ENCODE measurements at regions of chr12 and their contacts with region 1.

Region 1: DNA sequence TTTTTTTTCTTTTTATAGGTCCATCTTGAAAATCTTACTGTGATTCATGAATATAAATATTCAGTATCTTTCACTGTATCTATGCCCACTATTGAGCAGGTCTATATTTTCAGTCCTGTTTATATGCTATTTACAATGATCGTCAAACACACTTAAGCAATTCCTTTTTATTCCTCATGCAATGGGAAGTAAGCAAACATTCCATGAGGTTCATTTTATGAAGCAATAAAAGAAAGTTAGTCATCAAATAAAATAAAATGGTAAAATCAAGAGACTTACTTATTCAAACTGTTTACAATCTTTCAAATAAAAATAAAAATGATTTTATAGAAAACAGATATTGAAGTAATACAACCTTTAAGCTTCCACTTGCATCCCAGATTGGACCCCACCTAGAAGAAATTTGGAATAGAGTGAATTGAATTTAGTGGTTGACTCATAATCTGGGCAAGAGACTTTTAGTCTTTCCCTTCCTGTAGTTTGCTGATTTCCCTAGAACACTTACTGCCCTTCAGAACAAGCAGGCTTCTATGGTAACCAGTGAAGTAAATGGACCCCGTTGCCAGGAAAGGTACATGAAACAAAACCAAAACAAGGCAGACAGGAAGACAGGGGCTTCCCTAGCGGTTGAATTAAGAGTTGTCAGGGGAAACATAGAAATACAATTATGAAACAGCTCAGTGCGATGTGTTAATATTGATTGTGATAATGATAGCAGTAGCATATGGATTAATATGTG is 241.0 kb upstream of the ATP2B1 start:
- DNase-seq: peak; percentile 83
- ATAC-seq: peak; percentile 87
- H3K4me3 ChIP-seq: peak overlapping the region; percentile 33; the same call in 1 of the 2 replicates
- H3K27ac ChIP-seq: peak overlapping the region; percentile 83; the same call in 1 of the 2 replicates
- H3K4me1 ChIP-seq: peaks cover 15% of the 10 kb centered on the region; the same call in 1 of the 2 replicates
- H3K27me3 ChIP-seq: no peaks in the 10 kb centered on the region
- CTCF ChIP-seq: peak; percentile 31 to 63 (median 35); a peak in 5 of 6 replicates
- EP300 ChIP-seq: peak; percentile 86 to 96; a peak in 3 of 4 replicates
- POLR2A ChIP-seq: no peak
- RAD21 ChIP-seq: peak; percentile 71

Region 2: GRCh38 chr12:89756585-89757321 is 192.9 kb before region 1 on chr12:
- CTCF ChIA-PET with region 1: no interaction called
- POLR2A ChIA-PET with region 1: no interaction called
- RAD21 ChIA-PET with region 1: interaction called, 8 read pairs
- SMC1A ChIA-PET with region 1: interaction called, 8 read pairs
- in situ Hi-C with region 1: no loop called
- intact Hi-C with region 1: loop called (anchors 5 kb)
- DNase-seq: peak; percentile 97
- ATAC-seq: peak; percentile 89
- H3K4me3 ChIP-seq: no peak overlapping the region
- H3K27ac ChIP-seq: peak overlapping the region; percentile 90
- H3K4me1 ChIP-seq: peaks cover 44% of the 10 kb centered on the region
- H3K27me3 ChIP-seq: no peaks in the 10 kb centered on the region
- CTCF ChIP-seq: no peak
- EP300 ChIP-seq: peak; percentile 97 to 98
- POLR2A ChIP-seq: no peak
- RAD21 ChIP-seq: no peak

Region 3: GRCh38 chr12:89862511-89863179 is 87.0 kb before region 1 on chr12:
- CTCF ChIA-PET with region 1: interaction called, 5 read pairs
- POLR2A ChIA-PET with region 1: interaction called, 4 read pairs
- RAD21 ChIA-PET with region 1: interaction called, 4 read pairs
- SMC1A ChIA-PET with region 1: interaction called, 18 read pairs
- in situ Hi-C with region 1: no loop called
- intact Hi-C with region 1: loop called (anchors 2 kb)
- DNase-seq: peak; percentile 79
- ATAC-seq: peak; percentile 75
- H3K4me3 ChIP-seq: peak overlapping the region; percentile 60
- H3K27ac ChIP-seq: peak overlapping the region; percentile 89
- H3K4me1 ChIP-seq: peaks cover 39% of the 10 kb centered on the region
- H3K27me3 ChIP-seq: no peaks in the 10 kb centered on the region
- CTCF ChIP-seq: no peak
- EP300 ChIP-seq: peak in 1 of 2 experiments; percentile 17; a peak in 1 of 4 replicates
- POLR2A ChIP-seq: peak; percentile 58
- RAD21 ChIP-seq: 0 out of 2 replicates have a peak, but pooled peaks have one; percentile 19

Region 4: GRCh38 chr12:89960011-89960507 is 10.4 kb after region 1 on chr12:
- CTCF ChIA-PET with region 1: interaction called, 19 read pairs
- POLR2A ChIA-PET with region 1: interaction called, 22 read pairs
- RAD21 ChIA-PET with region 1: interaction called, 47 read pairs
- SMC1A ChIA-PET with region 1: interaction called, 94 read pairs
- in situ Hi-C with region 1: no loop called
- intact Hi-C with region 1: no loop called
- DNase-seq: peak; percentile 68
- ATAC-seq: peak; percentile 90
- H3K4me3 ChIP-seq: peak overlapping the region; percentile 65; the same call in 1 of the 2 replicates
- H3K27ac ChIP-seq: peak overlapping the region; percentile 71
- H3K4me1 ChIP-seq: peaks cover 9% of the 10 kb centered on the region
- H3K27me3 ChIP-seq: no peaks in the 10 kb centered on the region
- CTCF ChIP-seq: no peak
- EP300 ChIP-seq: peak in 1 of 2 experiments; percentile 55; a peak in 1 of 4 replicates
- POLR2A ChIP-seq: no peak
- RAD21 ChIP-seq: no peak

Region 5: DNA sequence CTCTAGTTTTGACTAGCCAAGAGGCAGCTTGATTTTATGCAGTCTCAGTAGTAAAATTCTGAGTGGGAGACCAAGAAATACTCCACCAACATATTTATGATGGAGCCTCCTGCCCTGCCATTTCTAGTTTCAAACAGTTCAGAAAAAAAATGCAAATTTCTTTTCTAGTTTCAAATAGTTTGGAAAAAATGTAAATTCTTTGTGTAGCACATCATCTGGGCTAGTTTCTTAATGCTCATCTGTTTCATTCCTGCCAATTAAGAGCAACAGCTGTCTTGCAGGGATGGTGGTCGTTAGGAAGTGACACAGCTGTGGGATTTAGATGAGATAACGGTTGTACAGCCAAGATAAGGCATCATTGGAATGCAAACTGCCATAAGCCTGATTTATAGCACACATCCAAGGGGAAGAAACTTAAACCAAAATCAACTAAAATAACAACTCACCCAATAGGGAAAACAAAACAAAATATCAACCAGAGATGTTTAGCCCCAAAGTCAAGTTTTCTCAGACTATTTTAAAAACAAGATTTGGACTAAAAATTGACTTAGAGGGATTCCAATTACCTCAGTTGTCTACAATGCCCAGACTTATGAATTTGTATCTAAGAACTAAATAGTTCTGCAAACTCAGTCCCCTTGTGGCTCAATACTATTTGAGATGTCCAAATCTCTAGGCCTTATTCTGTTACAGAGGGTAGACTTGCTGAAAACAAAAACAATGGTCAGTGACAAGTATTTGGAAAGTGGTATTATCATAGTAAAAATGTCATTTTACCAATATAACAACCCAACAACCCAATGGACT is 50.3 kb after region 1 on chr12:
- CTCF ChIA-PET with region 1: no interaction called
- POLR2A ChIA-PET with region 1: no interaction called
- RAD21 ChIA-PET with region 1: interaction called, 3 read pairs
- SMC1A ChIA-PET with region 1: interaction called, 12 read pairs
- in situ Hi-C with region 1: no loop called
- intact Hi-C with region 1: no loop called
- DNase-seq: no peak
- ATAC-seq: peak; percentile 65
- H3K4me3 ChIP-seq: no peak overlapping the region
- H3K27ac ChIP-seq: no peak overlapping the region
- H3K4me1 ChIP-seq: peaks cover 5% of the 10 kb centered on the region; the same call in 1 of the 2 replicates
- H3K27me3 ChIP-seq: no peaks in the 10 kb centered on the region
- CTCF ChIP-seq: no peak
- EP300 ChIP-seq: no peak
- POLR2A ChIP-seq: no peak
- RAD21 ChIP-seq: no peak